ENCODE measurements at regions of chr15 and their contacts with region 1.

Region 1: DNA sequence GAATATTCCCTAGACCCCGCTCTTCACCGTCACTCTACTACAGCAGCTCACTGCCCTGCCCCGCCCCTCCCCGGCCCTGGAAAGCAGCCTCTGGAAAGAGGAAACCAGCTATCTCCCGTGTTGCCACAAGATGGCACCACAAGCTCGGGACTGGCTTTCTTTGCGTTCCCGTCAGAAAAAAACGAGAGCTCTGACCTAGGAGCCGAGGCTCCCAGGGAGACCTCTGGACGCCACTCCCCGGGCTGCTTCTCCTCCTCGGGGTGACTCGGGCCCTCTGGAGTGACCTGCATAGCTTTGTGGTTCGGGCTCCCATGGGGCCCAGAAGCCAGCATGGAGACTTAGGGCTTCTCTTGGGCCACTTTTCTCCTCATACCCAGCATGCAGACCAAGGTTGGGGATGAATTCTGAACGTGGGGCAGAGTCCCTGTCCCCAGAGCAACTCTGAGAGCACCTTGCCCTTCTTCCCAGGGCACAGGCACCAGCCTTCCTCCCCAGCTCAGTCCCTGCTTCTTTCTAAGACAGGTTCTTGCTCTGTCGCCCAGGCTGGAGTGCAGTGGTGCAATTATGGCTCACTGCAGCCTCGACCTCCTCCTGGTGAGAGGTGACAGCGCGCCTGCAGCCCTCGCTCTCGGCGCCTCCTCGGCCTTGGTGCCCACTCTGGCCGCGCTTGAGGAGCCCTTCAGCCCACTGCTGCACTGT is 19.0 kb downstream of the STOML1 start:
- DNase-seq: peak; percentile 90
- ATAC-seq: peak; percentile 93
- H3K4me3 Mint-ChIP-seq: peak overlapping the region; percentile 48
- H3K27ac Mint-ChIP-seq: no peak overlapping the region
- H3K4me1 Mint-ChIP-seq: peaks cover 13% of the 10 kb centered on the region
- H3K27me3 Mint-ChIP-seq: peaks cover 15% of the 10 kb centered on the region
- CTCF ChIP-seq: peak; percentile 31; the same call in 1 of the 2 replicates

Region 2: DNA sequence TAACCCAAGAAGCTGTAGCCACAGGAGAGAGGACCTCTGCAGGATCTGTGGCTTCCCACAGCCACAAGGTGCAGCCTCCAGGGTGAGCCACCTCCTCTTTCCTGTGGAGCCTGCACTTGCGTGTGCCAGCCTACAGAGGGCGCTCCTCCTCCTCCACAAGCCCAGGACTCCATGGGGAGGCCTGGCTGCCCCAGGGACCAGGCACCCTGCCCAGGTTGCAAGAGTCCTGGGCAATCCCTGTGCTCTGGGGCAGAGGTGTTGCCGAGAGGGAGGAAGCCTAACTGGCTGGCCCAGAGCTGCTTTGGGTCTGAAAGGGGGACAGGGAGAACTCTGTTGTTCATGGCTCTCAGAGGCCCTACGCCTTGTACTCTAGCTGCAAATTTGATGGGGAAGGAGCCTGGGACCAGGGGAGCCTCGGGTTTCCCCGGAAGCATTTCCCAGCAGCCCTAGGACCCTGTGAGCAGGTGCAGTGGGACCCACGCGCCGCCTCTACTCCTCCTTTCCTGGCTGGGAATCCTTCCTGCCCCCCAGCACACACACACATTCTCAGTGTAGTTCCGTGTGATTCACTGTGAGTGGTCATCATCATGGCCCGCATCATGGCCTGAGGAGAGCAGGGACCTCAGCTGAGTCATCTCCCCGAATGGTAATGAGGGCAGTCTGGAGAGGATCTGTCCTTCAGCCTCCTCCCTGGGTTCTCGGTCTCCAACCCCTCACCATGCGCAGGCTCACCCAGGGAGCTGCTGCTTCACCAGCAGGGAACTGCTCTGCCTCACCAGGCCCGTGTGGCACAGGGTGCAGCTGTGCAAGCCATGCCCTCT is 75.5 kb before region 1 on chr15:
- CTCF ChIA-PET with region 1: interaction called, 10 read pairs
- POLR2A ChIA-PET with region 1: no interaction called
- DNase-seq: peak; percentile 78
- ATAC-seq: peak; percentile 92
- H3K4me3 Mint-ChIP-seq: no peak overlapping the region
- H3K27ac Mint-ChIP-seq: no peak overlapping the region
- H3K4me1 Mint-ChIP-seq: peaks cover 14% of the 10 kb centered on the region
- H3K27me3 Mint-ChIP-seq: no peaks in the 10 kb centered on the region
- CTCF ChIP-seq: peak; percentile 99

Region 3: GRCh38 chr15:73950831-73951561 is 22.1 kb before region 1 on chr15:
- CTCF ChIA-PET with region 1: interaction called, 93 read pairs
- POLR2A ChIA-PET with region 1: no interaction called
- DNase-seq: peak; percentile 91
- ATAC-seq: peak; percentile 93
- H3K4me3 Mint-ChIP-seq: no peak overlapping the region
- H3K27ac Mint-ChIP-seq: peak overlapping the region; percentile 97
- H3K4me1 Mint-ChIP-seq: peaks cover 10% of the 10 kb centered on the region
- H3K27me3 Mint-ChIP-seq: peaks cover 3% of the 10 kb centered on the region; the same call in 1 of the 2 replicates
- CTCF ChIP-seq: peak; percentile 37; the same call in 1 of the 2 replicates

Region 4: DNA sequence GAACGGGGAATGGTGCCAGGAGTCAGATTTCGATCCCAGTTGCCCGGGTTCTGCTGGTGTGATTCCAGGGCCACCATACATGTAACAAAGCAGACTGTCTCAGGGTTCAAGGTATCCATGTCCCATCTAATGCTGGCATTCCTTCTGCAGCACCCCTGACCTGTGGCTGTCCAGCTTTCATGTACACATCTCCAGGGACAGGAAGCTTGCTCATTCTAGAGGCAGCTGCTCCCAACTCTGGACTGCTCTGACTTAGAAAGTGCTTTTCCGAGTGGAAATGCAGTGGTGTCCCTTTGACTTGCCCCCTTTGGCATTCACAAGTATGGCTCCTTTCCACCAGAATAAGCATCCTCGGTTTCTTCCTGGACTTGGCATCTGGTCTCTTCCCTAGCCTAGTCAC is 52.3 kb after region 1 on chr15:
- CTCF ChIA-PET with region 1: interaction called, 13 read pairs
- POLR2A ChIA-PET with region 1: no interaction called
- DNase-seq: no peak
- ATAC-seq: no peak
- H3K4me3 Mint-ChIP-seq: no peak overlapping the region
- H3K27ac Mint-ChIP-seq: no peak overlapping the region
- H3K4me1 Mint-ChIP-seq: no peaks in the 10 kb centered on the region
- H3K27me3 Mint-ChIP-seq: no peaks in the 10 kb centered on the region
- CTCF ChIP-seq: no peak

Region 5: DNA sequence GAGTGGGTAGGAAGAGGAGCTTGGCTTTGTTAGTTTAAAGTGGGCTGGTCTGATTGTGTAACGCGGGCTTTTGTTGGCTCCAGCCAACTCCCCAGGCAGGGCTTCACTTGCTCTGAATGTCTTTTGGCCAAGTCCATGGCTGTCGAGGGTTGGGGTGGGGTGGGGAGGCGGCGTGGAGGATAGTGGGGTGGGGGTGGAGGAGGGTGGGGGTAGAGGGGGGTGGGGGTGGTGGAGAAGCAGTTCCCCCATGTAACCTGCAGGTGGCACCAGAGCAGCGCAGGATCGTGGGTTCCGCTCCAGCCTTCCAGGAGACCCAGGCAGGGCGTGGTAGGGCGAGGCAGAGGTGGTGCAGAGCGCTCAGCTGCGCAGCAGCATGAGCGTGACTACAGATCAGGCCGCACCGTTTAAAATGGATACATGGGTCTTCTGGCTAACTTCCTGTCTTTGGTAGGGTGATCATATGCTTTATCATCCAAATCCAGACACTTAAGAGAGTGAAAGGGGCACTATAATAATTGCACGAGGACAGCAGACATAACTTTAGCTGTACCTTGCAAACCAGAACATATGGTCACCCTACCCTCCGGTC is 80.9 kb after region 1 on chr15:
- CTCF ChIA-PET with region 1: interaction called, 112 read pairs
- POLR2A ChIA-PET with region 1: no interaction called
- DNase-seq: peak; percentile 82
- ATAC-seq: peak; percentile 97
- H3K4me3 Mint-ChIP-seq: no peak overlapping the region
- H3K27ac Mint-ChIP-seq: no peak overlapping the region
- H3K4me1 Mint-ChIP-seq: peaks cover 17% of the 10 kb centered on the region
- H3K27me3 Mint-ChIP-seq: peaks cover 21% of the 10 kb centered on the region
- CTCF ChIP-seq: peak; percentile 73

Region 6: GRCh38 chr15:74322181-74323076 is 349.3 kb after region 1 on chr15:
- CTCF ChIA-PET with region 1: interaction called, 34 read pairs
- POLR2A ChIA-PET with region 1: no interaction called
- DNase-seq: peak; percentile 85
- ATAC-seq: peak; percentile 68
- H3K4me3 Mint-ChIP-seq: no peak overlapping the region
- H3K27ac Mint-ChIP-seq: no peak overlapping the region
- H3K4me1 Mint-ChIP-seq: peaks cover 43% of the 10 kb centered on the region
- H3K27me3 Mint-ChIP-seq: no peaks in the 10 kb centered on the region; the same call in none of the 2 replicates
- CTCF ChIP-seq: peak; percentile 66

Measured in WTC11 (cell line).